Activated T-helper 1 cell treated with anti-CD3 and anti-CD28 coated beads, Interleukin-12 subunit alpha, Interleukin-12 subunit beta, Interleukin-2, Interleukin-4 antibody, amounts not matched to agents 30 ng/mL and 10 ng/mL and 1 ng/mL, durations not matched to agents 14 hours and 24 hours and 36 hours (primary cell): ENCODE measurements at regions of chr13 and their contacts with region 1.

Region 1: GRCh38 chr13:40026174-40026585 is 370.7 kb downstream of the COG6 start:
- DNase-seq: peak; percentile 67
- H3K4me3 Mint-ChIP-seq: peak overlapping the region; percentile 24
- H3K27ac Mint-ChIP-seq: peak overlapping the region; percentile 48
- H3K4me1 Mint-ChIP-seq: peaks cover 59% of the 10 kb centered on the region
- H3K27me3 Mint-ChIP-seq: peaks cover 5% of the 10 kb centered on the region

Region 2: DNA sequence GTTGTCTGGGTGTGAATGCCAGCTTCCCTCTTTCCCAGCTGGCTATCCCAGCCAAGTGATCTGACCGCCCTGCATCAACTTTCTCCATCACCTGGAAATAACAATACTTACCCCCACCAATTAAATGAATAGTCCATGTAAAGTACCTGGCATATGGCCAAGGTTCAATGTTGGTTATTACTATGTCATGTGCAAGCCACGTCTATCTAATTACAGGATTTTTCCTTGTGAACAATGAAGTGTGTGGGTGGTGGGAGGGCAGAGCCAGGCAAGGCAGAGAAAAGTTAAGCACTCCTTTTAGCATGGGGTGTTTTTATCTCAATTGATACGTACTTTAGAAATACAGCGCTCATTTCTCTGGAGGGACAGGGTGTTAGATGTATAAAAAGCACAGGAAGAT is 866.8 kb before region 1 on chr13:
- intact Hi-C with region 1: no loop called
- DNase-seq: no peak
- H3K4me3 Mint-ChIP-seq: no peak overlapping the region
- H3K27ac Mint-ChIP-seq: no peak overlapping the region
- H3K4me1 Mint-ChIP-seq: no peaks in the 10 kb centered on the region
- H3K27me3 Mint-ChIP-seq: peaks cover 8% of the 10 kb centered on the region

Region 3: GRCh38 chr13:39777527-39778061 is 248.6 kb before region 1 on chr13:
- intact Hi-C with region 1: loop called (anchors 1 kb)
- DNase-seq: peak; percentile 16
- H3K4me3 Mint-ChIP-seq: peak overlapping the region; percentile 45
- H3K27ac Mint-ChIP-seq: peak overlapping the region; percentile 91
- H3K4me1 Mint-ChIP-seq: peaks cover 50% of the 10 kb centered on the region
- H3K27me3 Mint-ChIP-seq: no peaks in the 10 kb centered on the region

Region 4: DNA sequence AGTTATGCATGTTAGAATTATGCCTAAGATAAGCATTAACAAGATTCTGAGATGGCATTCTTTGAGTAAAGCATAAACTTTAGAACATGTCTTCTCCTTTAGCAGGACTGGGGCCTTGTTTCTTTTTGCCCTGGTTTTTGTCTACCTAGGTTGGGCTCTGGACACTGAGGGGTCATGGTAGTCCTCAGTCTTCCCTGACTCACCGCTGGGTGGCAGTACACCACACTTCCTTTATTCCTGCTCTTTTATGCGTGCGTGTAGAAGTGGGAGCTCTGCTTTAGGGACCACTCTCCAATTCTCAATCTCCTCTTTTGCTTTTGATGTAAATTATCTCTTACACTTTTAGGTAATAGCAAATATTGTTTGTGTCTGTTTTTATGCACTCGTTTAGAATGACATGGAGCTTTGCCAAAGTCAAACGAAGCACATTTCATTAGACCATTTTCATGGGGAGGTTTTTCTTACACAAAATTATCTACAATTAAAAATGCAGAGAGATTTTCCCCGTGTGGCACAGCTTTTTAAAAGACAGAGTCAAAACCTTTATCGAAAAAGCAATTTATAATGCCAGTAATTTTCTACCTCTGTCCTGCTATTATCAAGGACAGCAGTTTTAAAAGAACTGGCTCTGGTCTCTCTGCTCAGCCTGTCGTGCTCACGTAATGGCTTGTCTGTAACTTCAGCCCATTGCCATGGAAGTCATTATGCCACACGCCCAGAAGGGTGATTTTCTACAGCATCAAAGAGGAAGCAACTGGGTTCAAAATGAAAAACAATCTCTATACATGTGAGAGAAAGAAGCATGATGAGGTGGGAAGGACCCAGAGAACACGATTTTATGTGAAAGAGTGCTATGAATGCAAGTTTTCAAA is 43.2 kb after region 1 on chr13:
- intact Hi-C with region 1: loop called (anchors 2 kb)
- DNase-seq: peak; percentile 45
- H3K4me3 Mint-ChIP-seq: no peak overlapping the region
- H3K27ac Mint-ChIP-seq: no peak overlapping the region
- H3K4me1 Mint-ChIP-seq: peaks cover 37% of the 10 kb centered on the region
- H3K27me3 Mint-ChIP-seq: no peaks in the 10 kb centered on the region

Region 5: DNA sequence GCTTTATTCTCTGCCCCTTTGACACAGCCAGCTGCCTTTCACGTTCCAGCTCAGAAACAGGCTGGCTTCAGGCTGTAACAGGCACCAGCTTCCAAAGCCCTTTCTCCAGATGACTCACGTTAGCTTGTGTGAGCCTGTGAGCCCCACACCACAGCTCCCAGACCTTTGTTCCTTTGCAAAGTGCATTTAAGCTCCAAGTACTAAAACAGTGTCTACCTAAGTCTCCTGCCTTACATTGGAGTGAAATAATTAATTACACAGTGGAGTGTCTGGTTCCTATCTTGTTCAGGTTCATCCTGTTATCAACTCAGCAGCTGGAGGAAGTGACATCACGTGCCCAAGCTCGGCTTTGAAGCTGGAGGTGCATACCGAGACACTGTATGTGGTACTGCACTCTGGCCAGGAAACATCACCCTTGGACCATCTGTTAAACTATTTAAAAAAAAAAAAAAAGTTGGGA is 164.5 kb after region 1 on chr13:
- intact Hi-C with region 1: loop called (anchors 1 kb)
- DNase-seq: peak; percentile 58
- H3K4me3 Mint-ChIP-seq: peak overlapping the region; percentile 35
- H3K27ac Mint-ChIP-seq: peak overlapping the region; percentile 87
- H3K4me1 Mint-ChIP-seq: peaks cover 66% of the 10 kb centered on the region
- H3K27me3 Mint-ChIP-seq: no peaks in the 10 kb centered on the region

Region 6: DNA sequence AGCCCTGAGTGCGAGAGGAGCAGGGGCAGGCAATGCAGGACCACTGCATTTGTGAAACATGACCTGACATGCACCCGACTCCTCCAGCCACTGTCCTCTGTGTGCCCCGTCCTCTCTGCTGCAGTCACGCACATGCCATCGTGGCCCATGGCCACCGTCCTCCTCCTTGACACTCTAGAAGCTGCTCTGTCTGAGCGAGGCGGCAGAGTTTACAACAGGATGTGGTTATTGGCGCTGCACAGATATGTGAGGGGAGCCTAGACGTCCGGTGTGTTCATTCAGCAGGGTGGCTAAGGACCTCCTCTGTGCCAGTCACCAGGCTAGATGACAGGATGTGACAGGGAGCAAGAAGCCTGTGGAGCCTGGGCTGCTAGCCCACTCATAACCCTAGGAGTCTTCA is 362.4 kb after region 1 on chr13:
- intact Hi-C with region 1: loop called (anchors 1 kb)
- DNase-seq: peak; percentile 79
- H3K4me3 Mint-ChIP-seq: peak overlapping the region; percentile 76
- H3K27ac Mint-ChIP-seq: peak overlapping the region; percentile 96
- H3K4me1 Mint-ChIP-seq: peaks cover 56% of the 10 kb centered on the region
- H3K27me3 Mint-ChIP-seq: no peaks in the 10 kb centered on the region

Region 7: DNA sequence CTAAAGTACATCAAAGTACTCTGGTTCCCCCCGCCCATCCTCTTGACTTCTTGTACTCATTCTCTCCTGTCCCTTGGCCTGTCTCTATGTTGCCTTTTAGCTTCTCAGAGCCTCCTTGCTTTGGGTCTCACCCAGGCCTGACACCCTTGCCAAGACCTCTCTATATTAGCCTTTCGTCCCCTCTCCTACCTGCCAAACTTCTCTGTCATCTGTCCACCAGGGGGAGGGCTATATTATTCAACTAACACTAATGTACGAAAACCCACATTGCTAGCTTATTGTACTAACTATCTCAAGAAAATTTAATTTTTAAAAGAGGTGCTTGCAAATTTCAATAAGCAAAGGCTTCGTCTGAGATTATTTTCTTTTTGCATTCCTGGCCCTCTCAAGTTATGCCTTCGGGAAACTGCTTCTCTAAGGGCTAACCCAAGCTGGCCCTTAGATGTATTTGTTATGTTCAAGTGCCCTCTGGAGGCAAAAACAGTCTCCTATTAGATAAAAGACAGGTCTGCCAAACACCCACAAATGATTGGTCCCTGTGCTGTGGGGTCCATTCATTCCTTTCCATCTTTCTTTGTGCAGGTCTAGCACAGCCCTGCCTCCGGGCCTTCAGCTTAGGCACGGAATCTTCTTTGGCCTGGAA is 751.1 kb after region 1 on chr13:
- intact Hi-C with region 1: loop called (anchors 5 kb)
- DNase-seq: peak; percentile 28
- H3K4me3 Mint-ChIP-seq: peak overlapping the region; percentile 76
- H3K27ac Mint-ChIP-seq: peak overlapping the region; percentile 99
- H3K4me1 Mint-ChIP-seq: peaks cover 33% of the 10 kb centered on the region
- H3K27me3 Mint-ChIP-seq: no peaks in the 10 kb centered on the region

Region 8: DNA sequence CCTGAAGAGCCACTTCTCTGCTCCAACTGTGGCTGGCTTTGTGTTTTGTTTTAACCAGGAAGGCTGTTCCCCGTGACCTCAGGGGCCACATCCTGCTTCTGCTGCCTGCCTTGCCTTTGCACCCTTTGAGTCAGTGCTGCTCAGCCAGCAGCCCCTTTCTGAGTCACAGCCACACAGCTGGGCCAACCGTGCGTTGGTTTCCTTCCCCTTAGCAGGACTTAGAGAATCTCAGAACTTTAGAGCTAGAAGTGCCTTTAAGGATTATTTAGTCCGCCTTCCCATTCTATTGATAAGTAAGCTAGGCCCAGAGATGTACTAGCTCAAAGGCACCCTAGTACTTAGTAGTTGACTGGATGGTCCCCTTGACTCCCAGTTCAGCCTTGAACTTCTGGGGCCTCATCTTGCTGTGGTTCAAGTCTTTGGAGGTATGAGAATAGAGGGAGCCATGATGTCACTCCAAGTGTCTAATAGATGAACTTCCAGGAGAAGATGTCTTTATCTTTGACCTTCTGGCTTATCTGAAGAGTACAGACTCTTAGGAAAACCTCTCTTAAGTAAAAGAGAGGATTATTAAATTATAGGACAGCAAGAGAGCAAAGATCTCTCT is 1439.2 kb after region 1 on chr13:
- intact Hi-C with region 1: no loop called
- DNase-seq: peak; percentile 89
- H3K4me3 Mint-ChIP-seq: peak overlapping the region; percentile 80
- H3K27ac Mint-ChIP-seq: peak overlapping the region; percentile 96
- H3K4me1 Mint-ChIP-seq: peaks cover 90% of the 10 kb centered on the region
- H3K27me3 Mint-ChIP-seq: no peaks in the 10 kb centered on the region